Activated CD8-positive, alpha-beta T cell treated with anti-CD3 and anti-CD28 coated beads, Interleukin-2, amount 10 ng/mL, durations not matched to agents 7 days and 5 days (primary cell): ENCODE measurements at regions of chr15 and their contacts with region 1.

Region 1: DNA sequence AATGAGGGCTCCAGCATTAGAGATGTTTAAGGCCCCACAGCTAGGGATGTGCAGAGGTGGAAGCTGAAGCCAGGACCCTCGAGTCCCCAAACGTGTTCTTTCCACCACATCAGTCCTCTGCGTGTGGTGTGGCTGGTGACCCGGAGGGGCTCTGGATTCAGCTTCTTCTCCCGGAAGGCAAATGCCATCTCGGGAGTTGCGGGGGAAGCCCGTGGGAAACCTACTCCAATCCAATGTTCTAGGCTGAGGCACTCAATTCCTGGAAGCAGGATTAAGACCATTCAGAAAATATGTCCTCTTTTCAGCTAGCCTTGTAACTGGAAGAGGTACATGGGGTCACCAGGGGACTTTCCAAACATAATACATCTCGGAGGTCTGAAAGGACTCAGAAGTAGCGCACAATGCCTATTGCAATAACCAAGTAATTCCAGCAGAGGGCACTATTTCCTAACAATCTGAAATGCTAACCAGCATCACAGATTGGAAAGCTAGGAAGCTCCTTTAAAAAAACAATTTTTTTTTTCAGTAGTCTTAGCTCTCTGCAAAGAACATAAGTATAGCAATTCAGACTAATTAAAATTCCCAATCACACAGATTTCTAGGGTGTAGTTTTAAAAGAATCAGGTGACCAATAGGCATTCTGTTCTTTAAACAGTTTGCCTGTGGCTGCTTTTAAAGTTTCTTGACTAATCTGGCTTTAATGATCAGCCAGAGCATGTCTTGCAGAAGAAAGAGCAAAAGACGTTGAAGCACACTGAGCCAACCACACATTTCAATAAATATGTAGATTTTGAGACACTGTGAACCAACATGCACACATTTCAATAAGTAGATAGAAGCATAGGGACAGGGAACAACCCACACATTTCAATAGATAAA is 36.1 kb downstream of the BNC1 start:
- DNase-seq: peak; percentile 48
- ATAC-seq: peak; percentile 44
- H3K4me3 Mint-ChIP-seq: no peak overlapping the region
- H3K27ac Mint-ChIP-seq: no peak overlapping the region
- H3K4me1 Mint-ChIP-seq: no peaks in the 10 kb centered on the region
- H3K27me3 Mint-ChIP-seq: peaks cover 50% of the 10 kb centered on the region

Region 2: DNA sequence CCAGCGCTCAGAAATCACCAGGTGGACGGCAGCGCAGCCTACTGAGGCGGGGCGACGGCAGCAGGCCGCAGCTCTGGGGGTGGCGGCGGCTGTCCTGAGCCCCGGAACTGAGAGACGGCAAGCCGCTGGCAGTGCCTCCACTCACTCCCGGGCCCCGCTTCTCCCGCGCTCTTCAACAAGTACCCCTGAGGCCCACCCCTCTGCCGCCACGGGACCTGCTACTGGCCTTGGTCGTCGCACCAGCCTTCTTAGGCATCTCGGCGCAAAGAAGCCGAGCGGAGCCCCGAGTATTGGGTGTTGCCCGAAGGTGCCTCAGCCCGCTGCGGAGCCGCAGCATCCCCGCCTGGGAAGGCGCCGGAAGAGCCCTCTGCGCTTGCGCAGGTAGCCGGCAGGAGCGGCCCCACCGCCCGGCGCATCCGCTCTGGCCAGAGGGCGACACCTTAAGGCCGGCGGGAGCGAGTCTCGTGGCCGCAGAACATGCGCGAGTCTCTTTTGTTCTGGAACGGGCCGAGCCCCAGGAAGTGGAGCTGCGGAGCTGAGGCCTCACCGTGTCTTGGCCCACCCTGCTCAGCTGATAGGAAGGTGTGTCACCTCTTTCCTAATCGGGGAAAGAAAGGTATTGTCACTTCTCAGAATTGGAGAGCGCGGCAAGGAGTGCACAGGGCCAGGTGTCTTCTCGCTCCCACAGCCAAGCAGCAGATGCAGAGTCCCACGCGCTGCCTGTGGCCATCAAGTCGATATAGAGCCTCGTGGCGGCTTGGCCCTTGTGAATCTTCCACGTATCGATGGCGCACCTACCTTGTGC is 236.9 kb before region 1 on chr15 and contains the start of gene C15orf40:
- CTCF ChIA-PET with region 1: interaction called, 11 read pairs
- POLR2A ChIA-PET with region 1: interaction called, 4 read pairs
- DNase-seq: peak; percentile 88
- ATAC-seq: peak; percentile 89
- H3K4me3 Mint-ChIP-seq: peak within 1 kb of the TSS; percentile 87
- H3K27ac Mint-ChIP-seq: peak within 1 kb of the TSS; percentile 90
- H3K4me1 Mint-ChIP-seq: peaks cover 50% of the 10 kb centered on the region
- H3K27me3 Mint-ChIP-seq: no peaks in the 10 kb centered on the region
- total RNA-seq, gene C15orf40: 25.2 to 31.0 TPM

Region 3: GRCh38 chr15:83283138-83283812 is 34.9 kb after region 1 on chr15:
- CTCF ChIA-PET with region 1: no interaction called
- POLR2A ChIA-PET with region 1: no interaction called
- DNase-seq: no peak
- ATAC-seq: peak; percentile 33
- H3K4me3 Mint-ChIP-seq: peak overlapping the region; percentile 50
- H3K27ac Mint-ChIP-seq: no peak overlapping the region
- H3K4me1 Mint-ChIP-seq: peaks cover 8% of the 10 kb centered on the region
- H3K27me3 Mint-ChIP-seq: peaks cover 61% of the 10 kb centered on the region

Region 4: GRCh38 chr15:83365370-83365938 is 117.1 kb after region 1 on chr15:
- CTCF ChIA-PET with region 1: interaction called, 10 read pairs
- POLR2A ChIA-PET with region 1: no interaction called
- DNase-seq: peak; percentile 41
- ATAC-seq: peak; percentile 51
- H3K4me3 Mint-ChIP-seq: peak overlapping the region; percentile 42
- H3K27ac Mint-ChIP-seq: no peak overlapping the region
- H3K4me1 Mint-ChIP-seq: peaks cover 7% of the 10 kb centered on the region
- H3K27me3 Mint-ChIP-seq: peaks cover 51% of the 10 kb centered on the region

Region 5: GRCh38 chr15:83380682-83381081 is 132.3 kb after region 1 on chr15:
- CTCF ChIA-PET with region 1: interaction called, 41 read pairs
- POLR2A ChIA-PET with region 1: no interaction called
- DNase-seq: peak; percentile 69
- ATAC-seq: peak; percentile 86
- H3K4me3 Mint-ChIP-seq: no peak overlapping the region
- H3K27ac Mint-ChIP-seq: no peak overlapping the region
- H3K4me1 Mint-ChIP-seq: peaks cover 5% of the 10 kb centered on the region
- H3K27me3 Mint-ChIP-seq: peaks cover 32% of the 10 kb centered on the region

Region 6: GRCh38 chr15:83436458-83437158 is 188.2 kb after region 1 on chr15:
- CTCF ChIA-PET with region 1: interaction called, 21 read pairs
- POLR2A ChIA-PET with region 1: no interaction called
- DNase-seq: no peak
- ATAC-seq: no peak
- H3K4me3 Mint-ChIP-seq: no peak overlapping the region
- H3K27ac Mint-ChIP-seq: no peak overlapping the region
- H3K4me1 Mint-ChIP-seq: no peaks in the 10 kb centered on the region
- H3K27me3 Mint-ChIP-seq: peaks cover 10% of the 10 kb centered on the region

Region 7: DNA sequence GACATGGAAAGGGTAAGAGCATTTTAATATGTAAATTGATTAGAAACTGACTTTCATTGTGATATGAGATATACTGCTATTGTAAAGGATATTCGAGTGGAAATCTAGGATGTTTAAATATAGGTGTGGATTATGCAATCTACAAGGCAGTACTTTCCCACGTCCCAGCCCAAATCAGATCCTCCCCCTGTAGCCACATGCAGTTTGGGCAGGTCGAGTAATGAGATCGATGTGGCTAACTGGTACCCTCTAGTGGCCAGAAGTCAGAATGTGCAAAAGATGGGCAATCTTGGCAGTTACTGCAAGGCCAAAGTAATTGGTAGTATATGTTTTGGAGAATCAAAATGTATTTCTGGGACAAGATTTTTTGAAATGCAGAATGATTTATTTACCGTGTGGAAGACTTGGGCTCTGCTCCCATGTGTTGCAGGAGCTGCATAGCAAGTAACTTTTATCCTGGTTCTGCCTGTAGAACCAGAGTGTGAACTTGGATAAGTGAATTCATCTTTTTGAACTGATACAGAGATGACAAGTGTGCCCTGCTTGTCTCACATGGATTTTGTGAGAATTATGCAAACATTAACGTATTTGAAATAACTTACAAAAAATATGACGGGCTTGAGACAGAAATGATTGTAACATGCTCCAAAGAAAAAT is 311.0 kb after region 1 on chr15:
- CTCF ChIA-PET with region 1: interaction called, 11 read pairs
- POLR2A ChIA-PET with region 1: no interaction called
- DNase-seq: peak; percentile 68
- ATAC-seq: peak; percentile 72
- H3K4me3 Mint-ChIP-seq: no peak overlapping the region
- H3K27ac Mint-ChIP-seq: no peak overlapping the region
- H3K4me1 Mint-ChIP-seq: no peaks in the 10 kb centered on the region
- H3K27me3 Mint-ChIP-seq: peaks cover 5% of the 10 kb centered on the region